ENCODE measurements at regions of chr10 and their contacts with region 1.

Region 1: DNA sequence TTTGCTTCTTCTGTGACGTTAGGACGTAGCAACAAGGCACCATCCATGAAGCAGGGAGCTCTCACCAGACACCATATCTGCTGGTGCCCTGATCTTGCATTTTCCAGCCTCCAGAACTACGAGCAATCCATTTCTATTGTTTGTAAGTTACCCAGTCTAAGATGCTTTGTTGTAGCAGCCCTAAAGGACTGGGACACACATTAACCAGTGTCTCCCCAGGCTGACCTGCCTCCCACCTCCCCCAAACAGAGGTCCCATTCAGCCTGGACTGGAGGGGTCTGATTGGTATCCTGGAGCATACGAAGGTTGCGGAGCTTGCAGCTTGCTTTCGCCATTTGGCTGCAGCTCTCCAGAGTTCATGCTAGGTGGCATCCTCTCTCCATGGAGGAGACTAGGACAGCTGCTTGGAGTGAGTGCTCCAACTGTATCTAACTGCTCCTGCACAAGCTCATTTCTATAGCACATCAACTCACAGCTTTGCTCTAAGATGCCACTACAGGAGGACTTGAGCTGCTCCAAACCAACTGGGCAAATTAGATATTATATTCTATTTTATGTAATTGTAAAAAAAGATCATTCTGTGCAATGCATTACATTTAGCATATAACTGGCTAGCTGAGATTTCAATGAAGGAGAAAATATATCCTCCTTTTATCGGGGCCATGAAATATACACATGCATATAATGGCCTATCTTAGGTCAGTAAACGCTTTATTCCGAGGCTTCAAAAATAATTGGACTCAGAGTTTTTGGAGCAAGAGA is 8.0 kb upstream of the GRK5 start:
- DNase-seq: peak; percentile 39 to 43
- ATAC-seq: peak; percentile 93 to 96
- H3K4me3 ChIP-seq: no peak overlapping the region
- H3K27ac ChIP-seq: no peak overlapping the region
- H3K4me1 ChIP-seq: no peaks in the 10 kb centered on the region
- H3K27me3 ChIP-seq: no peaks in the 10 kb centered on the region
- CTCF ChIP-seq: peak; percentile 52 to 83 (median 59)
- POLR2A ChIP-seq: no peak

Region 2: DNA sequence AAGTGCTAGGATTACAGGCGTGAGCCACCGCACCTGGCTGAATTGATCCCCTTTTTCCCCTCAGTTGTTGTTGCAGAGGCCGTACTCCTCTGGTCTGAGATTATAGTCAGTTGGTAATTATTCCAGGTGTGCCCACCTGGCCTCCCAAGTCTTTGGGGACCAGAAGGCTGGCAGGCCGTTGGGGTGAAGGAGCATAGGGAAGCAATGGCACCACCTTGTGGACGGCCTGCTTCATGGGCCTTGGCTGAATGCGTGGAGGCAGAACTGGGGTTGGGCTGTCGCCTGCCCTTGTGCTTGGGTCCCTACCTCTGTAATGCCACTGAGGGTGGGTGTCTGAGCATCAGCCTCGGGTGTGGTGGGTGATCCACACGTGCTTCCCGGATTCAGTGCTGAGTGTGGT is 217.4 kb after region 1 on chr10:
- in situ Hi-C with region 1: loop called in 2 of 4 experiments (anchors 5 to 10 kb)
- intact Hi-C with region 1: loop called (anchors 2 kb)
- DNase-seq: peak in 1 of 2 donors; percentile 54
- ATAC-seq: peak in 1 of 2 donors; percentile 52
- H3K4me3 ChIP-seq: no peak overlapping the region
- H3K27ac ChIP-seq: peak overlapping the region in 1 of 4 donors; percentile 44
- H3K4me1 ChIP-seq: peaks cover 19 to 22% of the 10 kb centered on the region in 2 donors
- H3K27me3 ChIP-seq: no peaks in the 10 kb centered on the region
- CTCF ChIP-seq: peak; percentile 51 to 75 (median 70)
- POLR2A ChIP-seq: no peak

Region 3: DNA sequence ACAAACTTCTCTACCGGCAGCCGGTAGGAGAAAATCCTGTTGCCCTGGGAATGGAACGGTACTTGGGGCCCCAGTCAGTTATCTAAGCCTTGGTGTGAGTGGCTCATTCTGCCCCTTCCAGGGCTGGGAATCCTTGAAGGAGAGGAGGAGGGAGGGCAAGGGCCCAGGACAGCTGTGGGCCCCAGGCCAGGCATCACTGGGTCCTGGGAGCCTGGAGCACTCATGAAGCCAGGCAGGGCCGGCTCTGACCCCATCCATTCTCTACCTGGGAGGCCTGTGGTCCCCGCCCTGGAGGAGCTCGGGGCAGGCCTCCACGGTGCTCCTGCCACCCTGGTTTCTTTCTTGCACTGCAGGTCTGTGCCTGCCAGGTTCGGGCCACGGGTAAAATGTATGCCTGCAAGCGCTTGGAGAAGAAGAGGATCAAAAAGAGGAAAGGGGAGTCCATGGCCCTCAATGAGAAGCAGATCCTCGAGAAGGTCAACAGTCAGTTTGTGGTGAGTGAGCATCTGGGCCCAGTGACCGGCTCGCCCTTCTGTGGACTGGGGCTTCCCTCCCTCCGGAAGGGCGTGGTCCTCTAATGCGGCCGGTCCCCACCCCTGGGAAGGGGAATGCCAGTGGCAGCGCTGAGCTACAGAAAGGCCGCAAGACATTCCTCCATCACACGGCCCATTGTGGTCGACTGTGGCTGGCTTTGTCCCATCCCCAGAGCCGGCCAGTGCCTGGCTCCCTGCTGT is 231.8 kb after region 1 on chr10:
- in situ Hi-C with region 1: loop called in 1 of 4 experiments (anchors 10 kb)
- intact Hi-C with region 1: no loop called
- DNase-seq: no peak
- ATAC-seq: no peak
- H3K4me3 ChIP-seq: no peak overlapping the region
- H3K27ac ChIP-seq: no peak overlapping the region
- H3K4me1 ChIP-seq: no peaks in the 10 kb centered on the region
- H3K27me3 ChIP-seq: no peaks in the 10 kb centered on the region
- CTCF ChIP-seq: no peak
- POLR2A ChIP-seq: no peak

Region 4: DNA sequence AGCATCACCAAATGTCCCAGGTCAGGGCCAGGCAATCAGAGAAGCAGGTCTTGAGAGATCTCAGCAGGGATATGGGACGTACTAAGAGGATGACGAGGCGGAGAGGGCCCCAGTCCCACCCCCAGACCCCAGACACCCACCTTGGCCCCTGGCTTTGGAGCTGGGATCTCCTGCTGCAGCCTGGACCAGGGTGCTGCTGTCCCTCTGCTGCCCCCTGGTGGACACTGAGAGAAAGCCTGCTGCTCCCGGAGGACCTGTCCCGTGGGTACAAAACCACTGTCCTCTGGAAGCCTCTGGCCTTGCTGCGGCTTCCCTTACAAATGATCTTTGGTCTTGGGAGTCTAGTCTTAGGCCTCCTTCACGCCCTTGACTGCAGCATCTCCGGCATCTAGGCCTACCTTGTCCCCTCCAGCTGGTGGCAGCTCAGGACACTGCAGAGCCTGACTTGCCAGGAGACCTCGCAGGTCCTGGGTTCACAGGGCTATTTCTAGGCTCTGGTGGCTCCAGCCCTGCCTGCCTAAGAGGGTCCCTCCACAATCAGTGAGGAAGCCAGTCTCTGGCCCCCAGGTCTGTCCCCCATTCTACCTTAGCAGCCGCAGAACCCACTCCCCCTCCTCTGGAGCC is 246.0 kb after region 1 on chr10:
- in situ Hi-C with region 1: loop called in 2 of 4 experiments (anchors 5 kb)
- intact Hi-C with region 1: loop called (anchors 1 kb)
- DNase-seq: peak; percentile 68 to 72
- ATAC-seq: peak; percentile 61 to 78
- H3K4me3 ChIP-seq: no peak overlapping the region
- H3K27ac ChIP-seq: no peak overlapping the region
- H3K4me1 ChIP-seq: peaks cover 4 to 9% of the 10 kb centered on the region in 2 donors
- H3K27me3 ChIP-seq: no peaks in the 10 kb centered on the region
- CTCF ChIP-seq: peak; percentile 76 to 98 (median 93)
- POLR2A ChIP-seq: no peak

Region 5: GRCh38 chr10:119542988-119543813 is 343.8 kb after region 1 on chr10:
- in situ Hi-C with region 1: no loop called
- intact Hi-C with region 1: loop called (anchors 1 kb)
- DNase-seq: no peak
- ATAC-seq: peak; percentile 40 to 60
- H3K4me3 ChIP-seq: peak overlapping the region; percentile 57 to 65 (median 62)
- H3K27ac ChIP-seq: peak overlapping the region; percentile 34 to 75 (median 44)
- H3K4me1 ChIP-seq: peaks cover 0 to 7% of the 10 kb centered on the region in 2 donors
- H3K27me3 ChIP-seq: peaks cover 0 to 15% (median 11%) of the 10 kb centered on the region in 3 donors
- CTCF ChIP-seq: peak in 3 of 5 experiments; percentile 33 to 48 (median 36)
- POLR2A ChIP-seq: peak; percentile 6 to 20

Measured in gastrocnemius medialis (tissue), 4 donors.